CD14-positive monocyte (primary cell): ENCODE measurements at regions of chr1 and their contacts with region 1.

Region 1: DNA sequence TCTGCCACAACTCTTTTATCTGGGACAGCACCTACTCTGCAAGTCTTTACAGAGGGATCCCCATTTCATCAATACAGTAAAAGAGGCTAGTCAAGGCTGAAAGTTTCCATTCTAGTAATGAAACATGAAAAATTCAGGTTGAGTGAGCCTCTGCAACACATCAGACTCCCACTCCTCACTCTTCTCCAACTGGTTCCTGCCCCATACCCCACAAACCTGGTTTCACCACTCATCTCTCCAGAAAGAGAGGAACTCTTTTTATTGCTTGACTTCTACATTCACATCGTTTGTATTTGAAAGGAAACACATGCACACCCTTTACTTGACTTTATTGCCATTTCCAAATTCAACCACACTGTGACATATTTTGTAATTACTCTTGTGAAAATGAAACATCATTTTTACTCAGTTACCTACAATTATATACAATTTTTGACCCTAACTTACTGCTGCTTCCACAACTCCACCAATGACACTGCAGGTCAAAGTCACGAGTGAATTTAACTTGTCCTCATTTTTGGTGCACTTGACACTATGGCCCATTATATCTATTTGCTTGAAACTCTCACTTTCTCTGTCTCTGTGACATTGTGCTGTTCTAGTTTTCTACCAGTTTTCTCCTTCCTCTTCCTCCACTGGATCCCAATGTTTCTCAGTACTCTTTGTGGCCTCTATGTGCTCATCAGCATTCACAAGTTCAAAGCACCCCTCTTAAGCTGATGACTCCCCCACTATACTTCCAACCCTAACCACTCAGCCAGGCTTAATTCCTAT is 8.0 kb downstream of the STX6 start:
- DNase-seq: peak in 2 of 3 donors; percentile 11 to 66
- H3K4me3 ChIP-seq: peak overlapping the region in 2 of 3 experiments; percentile 10 to 50
- H3K4me3 Mint-ChIP-seq: no peak overlapping the region
- H3K27ac ChIP-seq: peak overlapping the region; percentile 22 to 89
- H3K27ac Mint-ChIP-seq: no peak overlapping the region
- H3K4me1 ChIP-seq: peaks cover 75 to 83% of the 10 kb centered on the region in 2 donors
- H3K4me1 Mint-ChIP-seq: peaks cover 24% of the 10 kb centered on the region
- H3K27me3 ChIP-seq: no peaks in the 10 kb centered on the region
- H3K27me3 Mint-ChIP-seq: peaks cover 0 to 2% (median 0%) of the 10 kb centered on the region in 3 donors
- CTCF ChIP-seq: no peak

Region 2: GRCh38 chr1:180631766-180632325 is 382.8 kb before region 1 on chr1 and contains the start of gene XPR1:
- intact Hi-C with region 1: loop called in 1 of 2 experiments (anchors 10 kb)
- DNase-seq: peak; percentile 97 to 99 (median 98)
- H3K4me3 ChIP-seq: peak within 1 kb of the TSS; percentile 83 to 100 (median 96)
- H3K4me3 Mint-ChIP-seq: no peak within 1 kb of the TSS
- H3K27ac ChIP-seq: peak within 1 kb of the TSS; percentile 83 to 86
- H3K27ac Mint-ChIP-seq: peak within 1 kb of the TSS in 5 of 7 donors; percentile 88 to 93 (median 90)
- H3K4me1 ChIP-seq: peaks cover 13 to 17% of the 10 kb centered on the region in 2 donors
- H3K4me1 Mint-ChIP-seq: peaks cover 4% of the 10 kb centered on the region
- H3K27me3 ChIP-seq: no peaks in the 10 kb centered on the region
- H3K27me3 Mint-ChIP-seq: peaks cover 0 to 3% (median 1%) of the 10 kb centered on the region in 3 donors
- CTCF ChIP-seq: no peak
- polyA plus RNA-seq, gene XPR1: 4.7 to 12.5 (median 8.7) TPM